Mammary epithelial cell (primary cell): ENCODE measurements at regions of chr12 and their contacts with region 1.

Region 1: DNA sequence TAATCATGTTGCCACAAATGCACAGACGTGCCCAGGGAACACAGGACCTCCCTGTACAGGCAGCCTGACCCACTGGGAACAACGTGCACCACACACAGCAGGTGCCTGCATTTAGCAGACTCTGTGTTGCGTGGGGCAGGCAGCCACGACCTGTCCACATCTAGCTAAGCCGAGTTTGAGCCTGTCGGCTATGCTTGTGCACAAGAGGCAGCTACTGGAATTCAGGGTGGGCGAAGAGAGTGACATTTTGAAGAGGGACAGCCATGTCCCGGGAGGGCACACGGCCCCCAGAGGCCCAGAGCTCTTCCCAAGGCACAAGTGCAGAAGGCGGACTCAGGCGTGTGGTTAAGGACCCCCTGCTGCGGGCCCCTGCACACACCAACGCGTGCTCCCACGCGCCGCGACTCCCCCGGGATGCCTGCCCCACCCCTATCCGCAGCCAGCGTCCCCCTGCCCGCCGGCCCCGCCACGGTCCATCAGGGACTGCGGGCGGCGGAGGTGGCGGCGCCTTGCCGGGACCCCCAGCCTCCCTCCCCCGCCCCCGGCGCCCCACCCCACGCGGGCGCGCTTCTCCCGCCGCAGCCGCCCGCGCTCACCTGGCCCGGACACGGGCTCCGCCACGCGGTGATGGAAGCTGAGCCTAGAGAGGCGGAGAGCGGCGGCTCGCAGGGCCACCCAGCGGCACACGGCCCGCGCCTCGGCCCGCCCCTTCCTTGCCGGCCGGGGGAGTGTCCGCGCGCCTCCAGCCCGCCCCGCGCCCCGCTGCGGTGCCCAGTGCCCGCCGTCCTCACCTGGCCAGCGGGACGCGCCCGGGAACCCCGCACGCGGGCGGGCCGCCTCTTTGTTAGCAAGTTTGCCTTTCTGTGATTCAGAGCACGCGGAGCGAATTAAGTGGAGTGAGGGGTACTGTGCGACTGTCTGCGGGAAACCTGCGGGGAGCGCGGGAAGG is 125.3 kb upstream of the PRMT8 start:
- DNase-seq: peak; percentile 53
- H3K4me3 ChIP-seq: peak overlapping the region; percentile 43 to 71 (median 67)
- H3K27ac ChIP-seq: no peak overlapping the region
- H3K4me1 ChIP-seq: peaks cover 10% of the 10 kb centered on the region
- H3K27me3 ChIP-seq: no peaks in the 10 kb centered on the region
- CTCF ChIP-seq: peak in 1 of 2 donors; percentile 7

Region 2: GRCh38 chr12:3313675-3314663 is 51.8 kb before region 1 on chr12:
- CTCF ChIA-PET with region 1: no interaction called
- dilution Hi-C with region 1: no loop called
- in situ Hi-C with region 1: no loop called
- intact Hi-C with region 1: loop called (anchors 2 kb)
- DNase-seq: no peak
- H3K4me3 ChIP-seq: no peak overlapping the region
- H3K27ac ChIP-seq: no peak overlapping the region
- H3K4me1 ChIP-seq: peaks cover 58% of the 10 kb centered on the region
- H3K27me3 ChIP-seq: no peaks in the 10 kb centered on the region
- CTCF ChIP-seq: peak; percentile 29 to 44

Region 3: DNA sequence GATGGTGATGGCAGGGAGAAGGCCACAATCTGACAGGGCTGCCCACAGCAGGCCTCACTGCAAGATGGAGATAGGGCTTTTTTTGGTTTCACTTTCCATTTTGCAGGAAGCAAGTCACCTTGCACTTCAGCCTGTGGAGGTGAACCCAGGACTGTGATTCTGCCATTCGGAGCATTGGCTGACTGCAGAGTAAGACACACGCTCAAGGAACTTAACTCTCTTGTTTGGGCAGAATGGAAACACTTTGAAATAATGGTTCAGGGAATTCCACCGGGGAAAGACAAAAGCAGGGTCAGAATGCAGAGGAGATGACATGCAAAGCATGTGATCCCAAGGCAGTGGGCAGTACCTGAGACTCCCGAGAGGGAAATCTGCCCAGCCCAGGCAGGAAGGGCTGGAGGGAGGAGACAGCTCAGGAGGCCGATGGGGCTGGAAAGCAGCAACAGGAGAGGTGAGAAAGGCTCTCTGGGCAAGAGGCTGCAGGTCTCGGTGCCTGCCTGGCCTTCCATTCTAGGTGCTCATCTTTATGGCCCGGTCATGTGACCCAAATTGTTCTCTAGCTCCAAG is 66.5 kb after region 1 on chr12:
- CTCF ChIA-PET with region 1: no interaction called
- dilution Hi-C with region 1: no loop called
- in situ Hi-C with region 1: no loop called
- intact Hi-C with region 1: no loop called
- DNase-seq: peak; percentile 16
- H3K4me3 ChIP-seq: no peak overlapping the region
- H3K27ac ChIP-seq: no peak overlapping the region
- H3K4me1 ChIP-seq: no peaks in the 10 kb centered on the region
- H3K27me3 ChIP-seq: no peaks in the 10 kb centered on the region
- CTCF ChIP-seq: no peak